PC-3 (cell line): ENCODE measurements at regions of chr1 and their contacts with region 1.

Region 1: GRCh38 chr1:92485381-92486257 is 1.1 kb downstream of the GFI1 start:
- DNase-seq: no peak
- ATAC-seq: peak; percentile 23
- H3K4me3 ChIP-seq: peak overlapping the region; percentile 71
- H3K27ac ChIP-seq: no peak overlapping the region
- H3K4me1 ChIP-seq: peaks cover 13% of the 10 kb centered on the region; the same call in 1 of the 2 replicates
- H3K27me3 ChIP-seq: peaks cover 22% of the 10 kb centered on the region
- CTCF ChIP-seq: no peak

Region 2: DNA sequence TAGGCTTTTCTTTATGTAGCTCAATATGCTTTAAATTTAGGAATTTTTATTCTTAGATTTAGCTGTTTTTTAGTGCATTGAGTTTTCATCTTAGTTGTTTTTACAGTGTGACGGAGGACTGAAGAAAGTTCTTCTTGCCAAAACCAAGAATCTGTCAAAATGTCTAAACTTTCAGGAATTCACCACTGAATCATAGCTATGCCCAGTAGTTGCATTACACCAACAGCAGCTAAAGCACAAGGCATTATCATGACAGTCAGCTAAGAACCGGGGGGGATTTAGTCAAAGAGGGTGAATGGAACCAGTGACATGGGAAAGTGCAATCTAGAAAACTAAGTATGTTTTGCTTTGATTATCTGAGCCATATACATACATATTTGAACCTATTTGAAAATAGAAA is 274.5 kb before region 1 on chr1:
- CTCF ChIA-PET with region 1: no interaction called
- POLR2A ChIA-PET with region 1: no interaction called
- intact Hi-C with region 1: no loop called
- DNase-seq: no peak
- ATAC-seq: no peak
- H3K4me3 ChIP-seq: no peak overlapping the region
- H3K27ac ChIP-seq: no peak overlapping the region
- H3K4me1 ChIP-seq: no peaks in the 10 kb centered on the region
- H3K27me3 ChIP-seq: no peaks in the 10 kb centered on the region
- CTCF ChIP-seq: no peak

Region 3: GRCh38 chr1:92583821-92584760 is 98.5 kb after region 1 on chr1:
- CTCF ChIA-PET with region 1: no interaction called
- POLR2A ChIA-PET with region 1: no interaction called
- intact Hi-C with region 1: loop called (anchors 10 kb)
- DNase-seq: peak; percentile 72
- ATAC-seq: peak; percentile 84
- H3K4me3 ChIP-seq: peak overlapping the region; percentile 37
- H3K27ac ChIP-seq: peak overlapping the region; percentile 50
- H3K4me1 ChIP-seq: peaks cover 33% of the 10 kb centered on the region
- H3K27me3 ChIP-seq: no peaks in the 10 kb centered on the region
- CTCF ChIP-seq: peak; percentile 36